ENCODE measurements at regions of chr5 and their contacts with region 1.

Region 1: DNA sequence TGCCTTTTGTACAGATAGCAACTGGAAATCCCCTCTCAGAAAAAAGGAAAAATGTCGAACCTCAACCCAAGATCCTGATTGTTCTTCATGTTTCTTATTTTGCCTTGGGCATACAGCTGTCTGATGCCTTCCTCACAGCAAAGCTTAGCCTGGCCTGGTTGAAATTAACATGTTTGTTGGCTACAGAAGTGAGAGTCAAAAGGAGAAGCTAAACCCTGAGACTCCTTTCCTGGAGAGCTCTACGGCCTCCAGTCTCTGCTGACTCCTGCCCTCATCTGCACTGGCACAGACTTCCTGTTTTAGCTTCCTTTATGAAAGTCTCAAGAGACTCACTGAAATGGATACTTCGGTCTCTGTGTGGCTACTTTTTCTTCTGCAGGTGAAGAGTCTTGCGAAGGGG is 186.7 kb downstream of the PARP8 start:
- DNase-seq: peak; percentile 60
- ATAC-seq: peak; percentile 82
- H3K4me3 ChIP-seq: no peak overlapping the region
- H3K27ac ChIP-seq: peak overlapping the region; percentile 20; the same call in 1 of the 2 replicates
- H3K4me1 ChIP-seq: peaks cover 12% of the 10 kb centered on the region
- H3K27me3 ChIP-seq: no peaks in the 10 kb centered on the region
- CTCF ChIP-seq: no peak
- EP300 ChIP-seq: no peak
- POLR2A ChIP-seq: no peak
- RAD21 ChIP-seq: no peak

Region 2: GRCh38 chr5:50829023-50829422 is 24.1 kb before region 1 on chr5:
- CTCF ChIA-PET with region 1: no interaction called
- POLR2A ChIA-PET with region 1: no interaction called
- RAD21 ChIA-PET with region 1: no interaction called
- SMC1A ChIA-PET with region 1: interaction called, 11 read pairs
- in situ Hi-C with region 1: no loop called
- intact Hi-C with region 1: no loop called
- DNase-seq: no peak
- ATAC-seq: no peak
- H3K4me3 ChIP-seq: no peak overlapping the region
- H3K27ac ChIP-seq: no peak overlapping the region
- H3K4me1 ChIP-seq: no peaks in the 10 kb centered on the region
- H3K27me3 ChIP-seq: no peaks in the 10 kb centered on the region
- CTCF ChIP-seq: no peak
- EP300 ChIP-seq: no peak
- POLR2A ChIP-seq: no peak
- RAD21 ChIP-seq: no peak

Region 3: GRCh38 chr5:50898966-50899365 is 45.8 kb after region 1 on chr5:
- CTCF ChIA-PET with region 1: no interaction called
- POLR2A ChIA-PET with region 1: no interaction called
- RAD21 ChIA-PET with region 1: no interaction called
- SMC1A ChIA-PET with region 1: no interaction called
- in situ Hi-C with region 1: no loop called
- intact Hi-C with region 1: no loop called
- DNase-seq: no peak
- ATAC-seq: no peak
- H3K4me3 ChIP-seq: no peak overlapping the region
- H3K27ac ChIP-seq: no peak overlapping the region
- H3K4me1 ChIP-seq: no peaks in the 10 kb centered on the region
- H3K27me3 ChIP-seq: no peaks in the 10 kb centered on the region
- CTCF ChIP-seq: no peak
- EP300 ChIP-seq: no peak
- POLR2A ChIP-seq: no peak
- RAD21 ChIP-seq: no peak